Breast epithelium (tissue), 4 donors: ENCODE measurements at regions of chr14 and their contacts with region 1.

Region 1: DNA sequence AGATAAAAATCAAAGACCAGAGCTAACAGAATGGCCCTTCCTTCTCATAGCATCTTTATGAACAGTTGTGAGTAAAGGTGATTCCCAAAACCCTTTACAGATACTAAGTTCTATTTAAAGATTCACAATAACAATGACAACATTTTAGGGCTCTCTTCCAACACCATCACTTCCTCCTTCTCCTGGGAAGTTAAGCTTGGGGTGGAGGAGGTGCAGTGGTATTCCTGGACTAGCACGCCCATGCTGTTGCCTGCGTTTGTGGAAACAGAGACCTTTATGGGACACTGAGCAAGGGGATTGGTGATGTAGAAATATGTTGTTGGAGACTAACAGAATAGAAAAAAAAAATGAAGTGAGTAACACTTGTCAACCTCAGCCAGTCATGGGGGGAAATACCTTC is 22.5 kb downstream of the SYNE2 start:
- DNase-seq: no peak
- H3K4me3 ChIP-seq: no peak overlapping the region
- H3K27ac ChIP-seq: peak overlapping the region; percentile 54 to 83
- H3K4me1 ChIP-seq: peaks cover 0 to 21% of the 10 kb centered on the region in 2 donors
- H3K27me3 ChIP-seq: no peaks in the 10 kb centered on the region
- CTCF ChIP-seq: no peak
- POLR2A ChIP-seq: no peak

Region 2: DNA sequence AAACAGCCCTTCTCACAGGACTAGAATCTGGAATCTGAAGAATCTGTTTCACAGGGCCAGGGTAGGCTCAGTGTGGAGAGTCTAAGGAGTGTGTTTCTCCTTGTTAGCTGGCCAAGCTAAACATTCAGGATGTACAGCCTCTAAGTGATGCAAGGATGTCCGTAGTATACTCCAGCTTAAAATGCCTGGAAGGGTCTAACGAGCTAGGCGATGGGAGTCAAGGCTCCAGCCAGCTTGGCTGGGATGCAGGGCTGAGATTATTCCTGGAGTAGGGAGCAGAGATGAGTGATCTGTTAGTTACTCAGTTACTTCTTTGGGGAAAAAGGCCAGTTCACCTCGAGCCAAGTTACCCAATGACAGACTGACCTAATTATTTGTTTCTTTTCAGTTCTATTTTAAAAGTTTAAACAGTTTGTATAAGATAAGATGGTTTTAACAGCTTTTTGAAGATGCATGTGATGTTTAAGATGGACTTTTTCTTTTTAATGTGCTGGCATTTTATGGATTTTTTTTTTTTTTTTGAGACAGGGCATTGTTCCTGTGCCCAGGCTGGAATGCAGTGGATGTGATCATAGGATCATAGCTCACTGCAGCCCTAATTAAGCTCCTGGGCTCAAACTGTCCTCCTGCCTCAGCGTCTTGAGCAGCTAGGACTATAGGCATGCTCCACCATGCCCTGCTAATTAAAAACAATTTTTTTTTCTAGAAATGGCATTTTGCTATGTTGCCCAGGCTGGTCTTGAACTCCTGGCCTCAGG is 18.6 kb after region 1 on chr14:
- intact Hi-C with region 1: loop called (anchors 1 kb)
- DNase-seq: no peak
- H3K4me3 ChIP-seq: no peak overlapping the region
- H3K27ac ChIP-seq: peak overlapping the region; percentile 62 to 68
- H3K4me1 ChIP-seq: peaks cover 0 to 4% of the 10 kb centered on the region in 2 donors
- H3K27me3 ChIP-seq: no peaks in the 10 kb centered on the region
- CTCF ChIP-seq: no peak
- POLR2A ChIP-seq: no peak

Region 3: GRCh38 chr14:63940387-63940786 is 65.1 kb after region 1 on chr14:
- intact Hi-C with region 1: loop called (anchors 2 kb)
- DNase-seq: no peak
- H3K4me3 ChIP-seq: no peak overlapping the region
- H3K27ac ChIP-seq: no peak overlapping the region
- H3K4me1 ChIP-seq: no peaks in the 10 kb centered on the region
- H3K27me3 ChIP-seq: no peaks in the 10 kb centered on the region
- CTCF ChIP-seq: no peak
- POLR2A ChIP-seq: no peak